Caco-2 (cell line): ENCODE measurements at regions of chr10 and their contacts with region 1.

Region 1: DNA sequence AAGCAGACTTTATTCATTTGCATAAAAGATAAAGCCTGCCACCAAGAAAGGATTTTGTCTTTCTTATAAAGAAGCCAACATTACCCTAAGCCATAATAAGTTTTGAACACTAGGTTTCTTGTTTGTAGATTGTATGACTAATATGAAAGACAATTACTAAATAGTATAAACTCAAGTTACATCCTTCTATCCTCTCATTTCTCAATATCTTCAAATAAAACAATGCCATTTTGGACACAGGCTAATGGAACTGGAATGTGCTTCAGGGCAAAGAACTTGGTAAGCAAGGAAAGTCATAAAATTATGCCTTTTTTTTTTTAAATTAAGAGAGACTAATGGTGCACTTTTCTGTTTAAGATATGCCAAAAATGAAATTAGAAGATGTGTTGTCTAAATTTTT is 137.7 kb downstream of the DKK1 start:
- DNase-seq: no peak
- H3K4me3 ChIP-seq: no peak overlapping the region
- H3K4me3 Mint-ChIP-seq: no peak overlapping the region
- H3K27ac Mint-ChIP-seq: no peak overlapping the region
- H3K4me1 ChIP-seq: peaks cover 48% of the 10 kb centered on the region
- H3K4me1 Mint-ChIP-seq: peaks cover 25% of the 10 kb centered on the region
- H3K27me3 ChIP-seq: no peaks in the 10 kb centered on the region
- H3K27me3 Mint-ChIP-seq: no peaks in the 10 kb centered on the region
- CTCF ChIP-seq: peak in 1 of 2 experiments; percentile 2

Region 2: DNA sequence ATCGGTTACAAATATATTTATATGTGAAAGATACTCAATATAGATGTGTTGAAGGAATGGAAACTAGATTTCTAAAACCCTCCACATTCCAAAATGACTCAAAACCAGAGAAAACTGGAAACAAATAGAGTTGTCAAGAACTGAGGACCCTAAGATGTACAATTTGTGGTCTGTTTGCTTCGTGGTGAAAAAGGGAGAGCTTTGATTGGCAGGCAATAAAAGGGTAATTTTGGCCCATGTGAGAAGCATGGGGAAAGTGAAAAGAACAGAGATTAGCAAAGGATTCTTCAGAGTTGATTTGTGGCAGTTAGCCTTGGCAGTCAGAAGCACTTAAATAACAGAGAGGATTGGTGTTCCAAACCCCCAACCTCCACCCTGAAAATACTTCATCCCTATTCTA is 174.8 kb before region 1 on chr10:
- CTCF ChIA-PET with region 1: no interaction called
- POLR2A ChIA-PET with region 1: no interaction called
- intact Hi-C with region 1: no loop called
- DNase-seq: no peak
- H3K4me3 ChIP-seq: no peak overlapping the region
- H3K4me3 Mint-ChIP-seq: no peak overlapping the region
- H3K27ac Mint-ChIP-seq: no peak overlapping the region
- H3K4me1 ChIP-seq: no peaks in the 10 kb centered on the region
- H3K4me1 Mint-ChIP-seq: no peaks in the 10 kb centered on the region
- H3K27me3 ChIP-seq: no peaks in the 10 kb centered on the region
- H3K27me3 Mint-ChIP-seq: no peaks in the 10 kb centered on the region
- CTCF ChIP-seq: no peak

Region 3: GRCh38 chr10:52313933-52314816 is 137.6 kb before region 1 on chr10 and contains the start of gene DKK1:
- CTCF ChIA-PET with region 1: interaction called, 5 read pairs
- POLR2A ChIA-PET with region 1: interaction called, 11 read pairs
- intact Hi-C with region 1: loop called (anchors 1 kb)
- DNase-seq: peak; percentile 99 to 100
- H3K4me3 ChIP-seq: peak within 1 kb of the TSS; percentile 63
- H3K4me3 Mint-ChIP-seq: peak within 1 kb of the TSS; percentile 96
- H3K27ac Mint-ChIP-seq: peak within 1 kb of the TSS; percentile 95
- H3K4me1 ChIP-seq: peaks cover 40% of the 10 kb centered on the region
- H3K4me1 Mint-ChIP-seq: peaks cover 33% of the 10 kb centered on the region
- H3K27me3 ChIP-seq: no peaks in the 10 kb centered on the region
- H3K27me3 Mint-ChIP-seq: no peaks in the 10 kb centered on the region
- CTCF ChIP-seq: peak; percentile 99
- total RNA-seq, gene DKK1: 1,709 and 1,866 TPM in 2 replicates

Region 4: DNA sequence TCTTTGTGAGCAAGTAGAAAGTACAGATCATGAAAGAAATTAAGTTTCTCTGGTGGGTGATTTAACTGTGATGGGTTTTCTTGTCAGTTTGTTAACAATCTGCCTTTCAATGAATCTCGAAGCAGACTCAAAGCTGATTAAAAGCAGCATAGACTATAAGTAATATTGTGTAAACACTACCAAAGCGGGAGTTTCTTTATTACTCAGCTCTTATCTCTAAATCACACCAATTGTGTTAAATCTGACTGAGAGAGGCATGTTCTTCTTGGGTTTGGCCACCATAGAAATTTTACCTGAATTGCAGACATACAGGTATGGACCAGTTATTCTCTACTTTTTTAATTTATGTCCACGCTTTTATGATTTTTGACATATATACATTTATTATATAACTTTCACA is 72.5 kb before region 1 on chr10:
- CTCF ChIA-PET with region 1: no interaction called
- POLR2A ChIA-PET with region 1: no interaction called
- intact Hi-C with region 1: loop called (anchors 1 kb)
- DNase-seq: no peak
- H3K4me3 ChIP-seq: no peak overlapping the region
- H3K4me3 Mint-ChIP-seq: peak overlapping the region; percentile 54
- H3K27ac Mint-ChIP-seq: peak overlapping the region; percentile 80
- H3K4me1 ChIP-seq: peaks cover 69% of the 10 kb centered on the region
- H3K4me1 Mint-ChIP-seq: peaks cover 47% of the 10 kb centered on the region
- H3K27me3 ChIP-seq: no peaks in the 10 kb centered on the region
- H3K27me3 Mint-ChIP-seq: no peaks in the 10 kb centered on the region
- CTCF ChIP-seq: no peak

Region 5: DNA sequence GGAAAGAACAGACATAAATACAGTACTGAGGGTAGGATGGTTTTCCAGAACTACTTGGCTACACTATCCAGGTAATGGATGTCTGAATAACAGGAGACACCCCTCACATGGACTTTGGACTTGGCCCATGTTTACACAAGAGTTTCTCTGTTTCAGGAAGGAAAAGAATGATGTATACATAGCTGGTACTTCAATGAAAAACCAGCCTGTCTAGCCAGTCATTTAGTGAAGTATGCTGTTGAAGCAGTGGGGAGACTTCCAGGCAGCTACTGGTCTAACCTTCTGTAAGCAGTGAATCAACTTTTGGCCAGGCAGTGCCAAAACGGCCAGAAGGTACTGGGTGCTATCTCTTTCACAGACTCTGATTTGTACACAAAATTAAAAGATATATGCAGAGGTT is 185.8 kb after region 1 on chr10:
- CTCF ChIA-PET with region 1: no interaction called
- POLR2A ChIA-PET with region 1: no interaction called
- intact Hi-C with region 1: loop called (anchors 1 kb)
- DNase-seq: peak; percentile 86 to 89
- H3K4me3 ChIP-seq: no peak overlapping the region
- H3K4me3 Mint-ChIP-seq: peak overlapping the region; percentile 14
- H3K27ac Mint-ChIP-seq: peak overlapping the region; percentile 57
- H3K4me1 ChIP-seq: peaks cover 34% of the 10 kb centered on the region
- H3K4me1 Mint-ChIP-seq: peaks cover 40% of the 10 kb centered on the region
- H3K27me3 ChIP-seq: no peaks in the 10 kb centered on the region
- H3K27me3 Mint-ChIP-seq: no peaks in the 10 kb centered on the region
- CTCF ChIP-seq: no peak